ENCODE measurements at regions of chr1 and their contacts with region 1.

Region 1: GRCh38 chr1:216600730-216601609 is 122.3 kb downstream of the ESRRG start:
- DNase-seq: peak; percentile 17 to 37
- H3K4me3 ChIP-seq: peak overlapping the region; percentile 64
- H3K27ac ChIP-seq: 0 out of 2 replicates have a peak overlapping the region, but pooled peaks have one; percentile 33
- H3K4me1 ChIP-seq: no peaks in the 10 kb centered on the region; the same call in 1 of the 2 replicates
- H3K27me3 ChIP-seq: no peaks in the 10 kb centered on the region
- CTCF ChIP-seq: peak; percentile 51; the same call in 1 of the 2 replicates

Region 2: GRCh38 chr1:216531263-216532239 is 69.4 kb before region 1 on chr1:
- CTCF ChIA-PET with region 1: no interaction called
- POLR2A ChIA-PET with region 1: no interaction called
- intact Hi-C with region 1: no loop called
- DNase-seq: no peak
- H3K4me3 ChIP-seq: peak overlapping the region; percentile 45; the same call in 1 of the 2 replicates
- H3K27ac ChIP-seq: no peak overlapping the region
- H3K4me1 ChIP-seq: peaks cover 14% of the 10 kb centered on the region
- H3K27me3 ChIP-seq: no peaks in the 10 kb centered on the region
- CTCF ChIP-seq: no peak

Region 3: DNA sequence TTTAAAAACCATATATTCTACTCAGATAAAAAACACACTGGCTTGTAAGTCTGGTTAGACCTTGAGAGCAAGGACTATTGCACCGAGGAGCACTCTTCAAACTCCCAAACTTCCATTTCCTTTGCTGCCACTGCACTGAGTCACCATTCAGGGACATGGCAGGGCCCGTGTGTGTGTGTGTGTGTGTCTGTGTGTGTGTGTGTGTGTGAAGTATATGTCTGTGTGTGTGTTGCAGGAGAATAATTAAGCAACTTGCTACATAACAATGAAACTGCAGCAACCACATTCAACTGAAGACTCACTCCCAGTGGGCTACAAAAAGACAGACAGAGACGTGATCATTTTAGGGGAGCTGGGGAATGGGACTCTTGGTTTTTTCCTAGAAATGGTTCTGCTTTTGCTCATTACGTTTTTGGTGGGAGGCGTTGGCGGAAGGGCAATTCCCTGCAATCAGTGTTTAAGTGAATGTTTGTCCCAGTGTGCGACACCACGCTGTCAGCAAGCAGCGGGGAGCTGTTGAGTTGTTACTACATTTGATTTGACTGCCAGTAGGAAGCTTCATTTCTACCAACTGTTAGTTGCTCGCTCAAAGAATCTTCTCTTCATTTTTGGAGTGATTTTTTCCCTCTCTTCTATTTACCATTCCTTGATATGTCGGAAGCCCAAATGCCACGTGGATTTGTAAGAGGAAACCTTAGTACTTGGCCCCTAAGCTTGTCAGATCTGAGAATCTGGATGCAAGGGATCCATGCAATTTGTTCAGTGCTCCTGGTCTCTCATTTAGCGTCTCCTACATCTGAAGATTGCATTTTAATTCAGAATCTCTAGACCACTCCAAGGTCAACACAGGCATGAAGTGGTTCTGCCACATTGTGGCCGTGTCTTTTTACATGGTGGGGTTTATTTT is 86.1 kb after region 1 on chr1:
- CTCF ChIA-PET with region 1: interaction called, 14 read pairs
- POLR2A ChIA-PET with region 1: no interaction called
- intact Hi-C with region 1: no loop called
- DNase-seq: no peak
- H3K4me3 ChIP-seq: no peak overlapping the region
- H3K27ac ChIP-seq: no peak overlapping the region
- H3K4me1 ChIP-seq: no peaks in the 10 kb centered on the region
- H3K27me3 ChIP-seq: no peaks in the 10 kb centered on the region
- CTCF ChIP-seq: no peak

Region 4: DNA sequence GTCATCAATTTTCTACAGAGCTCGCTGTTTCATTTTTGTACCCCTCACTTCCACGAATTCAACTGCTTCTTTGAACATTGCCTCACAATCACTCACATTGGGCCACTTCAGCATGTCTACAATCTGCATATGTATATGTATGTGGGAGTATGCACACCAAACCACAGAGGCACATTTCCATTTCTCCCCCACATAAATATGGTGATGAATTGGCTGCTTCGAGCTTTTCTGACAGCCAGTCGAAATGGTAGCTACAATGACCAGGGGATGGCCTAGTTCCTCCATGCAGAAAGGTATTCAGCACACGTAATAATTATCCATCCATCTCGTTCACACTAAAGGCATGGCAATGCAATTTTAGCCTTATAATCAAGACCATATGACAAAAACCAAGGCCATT is 351.9 kb after region 1 on chr1:
- CTCF ChIA-PET with region 1: no interaction called
- POLR2A ChIA-PET with region 1: interaction called, 10 read pairs
- intact Hi-C with region 1: no loop called
- DNase-seq: no peak
- H3K4me3 ChIP-seq: no peak overlapping the region
- H3K27ac ChIP-seq: no peak overlapping the region
- H3K4me1 ChIP-seq: no peaks in the 10 kb centered on the region
- H3K27me3 ChIP-seq: no peaks in the 10 kb centered on the region
- CTCF ChIP-seq: no peak

Measured in PC-9 (cell line).